ENCODE measurements at regions of chr9 and their contacts with region 1.

Region 1: DNA sequence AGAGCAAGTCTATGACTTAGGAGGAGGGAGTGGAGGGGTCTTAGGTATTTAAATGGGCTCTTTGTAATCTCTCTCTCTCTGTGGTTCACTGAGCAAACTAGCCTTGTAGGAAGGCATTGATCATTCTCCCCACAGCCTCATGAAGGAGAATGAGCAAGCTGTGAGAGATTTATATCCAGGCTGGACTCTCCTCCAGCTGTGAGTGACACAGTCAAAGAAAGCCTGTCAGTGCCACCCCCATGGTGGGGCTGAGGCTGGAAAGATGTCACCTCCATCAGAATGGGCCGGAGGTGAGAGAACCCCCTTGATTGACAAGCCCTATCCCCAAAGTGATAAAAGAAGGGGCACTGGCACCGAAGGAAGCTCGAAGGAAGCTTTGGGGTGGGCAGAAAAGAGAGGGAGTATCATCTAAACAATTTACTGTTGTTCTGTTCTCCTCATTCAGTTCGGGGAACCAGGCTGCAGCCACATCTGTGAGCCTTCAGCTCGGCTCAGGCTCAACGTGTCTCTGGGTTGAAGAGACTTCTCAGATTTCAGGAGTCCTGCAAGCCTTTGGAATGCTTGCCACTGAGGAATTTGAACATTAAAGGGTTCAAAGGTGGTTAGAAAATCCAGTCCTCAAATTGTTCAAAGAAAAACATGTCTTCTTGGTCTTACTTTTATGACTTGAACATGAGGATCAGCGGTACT is 538.2 kb upstream of the ZNF462 start:
- DNase-seq: no peak
- ATAC-seq: peak; percentile 4; the same call in 1 of the 3 replicates
- H3K4me3 ChIP-seq: no peak overlapping the region
- H3K27ac ChIP-seq: no peak overlapping the region
- H3K4me1 ChIP-seq: no peaks in the 10 kb centered on the region
- H3K27me3 ChIP-seq: no peaks in the 10 kb centered on the region
- CTCF ChIP-seq: no peak
- EP300 ChIP-seq: no peak
- POLR2A ChIP-seq: no peak
- RAD21 ChIP-seq: no peak

Region 2: GRCh38 chr9:106310782-106311181 is 14.0 kb before region 1 on chr9:
- CTCF ChIA-PET with region 1: interaction called, 10 read pairs
- POLR2A ChIA-PET with region 1: interaction called, 15 read pairs
- RAD21 ChIA-PET with region 1: interaction called, 47 read pairs
- SMC1A ChIA-PET with region 1: interaction called, 50 read pairs
- in situ Hi-C with region 1: no loop called
- intact Hi-C with region 1: no loop called
- DNase-seq: peak; percentile 31
- ATAC-seq: peak; percentile 72
- H3K4me3 ChIP-seq: no peak overlapping the region
- H3K27ac ChIP-seq: no peak overlapping the region
- H3K4me1 ChIP-seq: no peaks in the 10 kb centered on the region
- H3K27me3 ChIP-seq: no peaks in the 10 kb centered on the region
- CTCF ChIP-seq: no peak
- EP300 ChIP-seq: peak; percentile 62 to 72; a peak in 2 of 4 replicates
- POLR2A ChIP-seq: no peak
- RAD21 ChIP-seq: no peak

Region 3: DNA sequence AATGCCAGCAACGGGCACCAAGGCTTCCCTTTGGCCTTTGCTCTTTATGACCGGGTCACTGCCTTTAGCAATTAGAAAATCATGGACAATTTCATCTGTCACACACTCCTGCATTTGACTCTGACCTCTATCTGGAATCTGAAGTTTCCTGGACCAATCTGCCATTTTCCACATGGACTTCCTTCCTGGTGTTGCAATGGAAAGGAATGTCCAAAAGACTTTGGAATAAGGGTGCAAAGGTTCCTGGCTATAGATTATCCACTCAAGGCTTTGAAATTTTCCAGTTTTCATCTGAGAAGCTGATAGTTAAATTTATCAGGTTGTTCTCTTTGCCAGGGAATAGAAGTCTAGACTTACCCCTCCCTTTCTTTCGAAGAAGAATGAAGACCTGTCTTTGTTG is 15.1 kb after region 1 on chr9:
- CTCF ChIA-PET with region 1: interaction called, 6 read pairs
- POLR2A ChIA-PET with region 1: interaction called, 3 read pairs
- RAD21 ChIA-PET with region 1: interaction called, 8 read pairs
- SMC1A ChIA-PET with region 1: interaction called, 14 read pairs
- in situ Hi-C with region 1: no loop called
- intact Hi-C with region 1: no loop called
- DNase-seq: no peak
- ATAC-seq: no peak
- H3K4me3 ChIP-seq: no peak overlapping the region
- H3K27ac ChIP-seq: no peak overlapping the region
- H3K4me1 ChIP-seq: no peaks in the 10 kb centered on the region
- H3K27me3 ChIP-seq: no peaks in the 10 kb centered on the region
- CTCF ChIP-seq: no peak
- EP300 ChIP-seq: no peak
- POLR2A ChIP-seq: no peak
- RAD21 ChIP-seq: no peak

Region 4: GRCh38 chr9:106637486-106637885 is 312.8 kb after region 1 on chr9:
- CTCF ChIA-PET with region 1: no interaction called
- POLR2A ChIA-PET with region 1: no interaction called
- RAD21 ChIA-PET with region 1: no interaction called
- SMC1A ChIA-PET with region 1: no interaction called
- in situ Hi-C with region 1: no loop called
- intact Hi-C with region 1: no loop called
- DNase-seq: no peak
- ATAC-seq: no peak
- H3K4me3 ChIP-seq: no peak overlapping the region
- H3K27ac ChIP-seq: no peak overlapping the region
- H3K4me1 ChIP-seq: no peaks in the 10 kb centered on the region
- H3K27me3 ChIP-seq: no peaks in the 10 kb centered on the region
- CTCF ChIP-seq: no peak
- EP300 ChIP-seq: no peak
- POLR2A ChIP-seq: no peak
- RAD21 ChIP-seq: no peak